Activated CD4-positive, alpha-beta T cell treated with anti-CD3 and anti-CD28 coated beads, Interleukin-2, amount 10 ng/mL, durations not matched to agents 24 days and 14 days (primary cell): ENCODE measurements at regions of chr14 and their contacts with region 1.

Region 1: GRCh38 chr14:61416591-61416990 is 95.2 kb downstream of the PRKCH start:
- DNase-seq: peak; percentile 70
- H3K4me3 Mint-ChIP-seq: peak overlapping the region; percentile 52
- H3K27ac Mint-ChIP-seq: peak overlapping the region; percentile 75
- H3K4me1 Mint-ChIP-seq: peaks cover 58% of the 10 kb centered on the region
- H3K27me3 Mint-ChIP-seq: no peaks in the 10 kb centered on the region

Region 2: DNA sequence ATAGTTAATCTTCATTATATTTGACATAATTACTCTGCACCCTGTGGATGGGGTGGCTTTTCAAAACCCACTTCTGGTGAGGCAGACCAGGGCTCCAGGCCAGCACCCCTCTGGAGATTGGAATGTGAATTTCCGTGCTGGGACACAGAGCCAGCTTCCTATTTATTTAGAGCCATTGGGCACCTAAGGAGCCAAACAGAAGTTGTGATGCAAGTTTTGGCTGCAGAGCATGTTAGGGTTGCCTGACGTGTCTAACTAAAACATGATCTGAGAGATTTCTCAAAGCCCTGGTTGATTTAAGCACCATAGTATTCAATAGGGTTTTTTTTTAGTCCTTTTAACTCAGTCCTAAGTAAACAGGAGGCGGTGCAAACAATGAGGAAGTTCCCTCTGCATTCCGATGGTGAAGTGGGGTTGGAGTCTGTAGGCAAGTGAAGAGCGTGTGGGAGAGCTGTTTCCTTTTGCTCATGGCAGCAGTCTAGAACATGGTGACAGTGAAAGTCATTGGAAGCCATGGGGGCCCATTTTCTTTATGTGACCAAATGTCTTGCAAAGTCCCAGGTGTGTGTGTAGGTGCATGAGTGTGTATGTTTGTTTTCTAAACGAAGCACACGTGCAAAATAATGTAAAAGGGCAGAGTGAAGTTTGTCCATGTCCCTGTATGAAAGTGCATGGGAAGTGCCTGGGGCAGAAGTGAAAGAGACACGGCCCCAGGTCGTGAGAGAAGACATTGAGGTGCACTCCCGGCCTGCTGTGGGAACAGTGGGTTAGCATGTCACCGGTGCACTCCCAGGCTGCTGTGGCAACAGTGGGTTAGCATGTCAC is 22.5 kb after region 1 on chr14:
- intact Hi-C with region 1: loop called (anchors 1 kb)
- DNase-seq: peak; percentile 85
- H3K4me3 Mint-ChIP-seq: peak overlapping the region; percentile 87
- H3K27ac Mint-ChIP-seq: peak overlapping the region; percentile 96
- H3K4me1 Mint-ChIP-seq: peaks cover 78% of the 10 kb centered on the region
- H3K27me3 Mint-ChIP-seq: no peaks in the 10 kb centered on the region